Activated CD4-positive, alpha-beta T cell treated with anti-CD3 and anti-CD28 coated beads, Interleukin-2, amount 10 ng/mL, durations not matched to agents 24 days and 14 days (primary cell): ENCODE measurements at regions of chr5 and their contacts with region 1.

Region 1: GRCh38 chr5:160508780-160509361 is 87.2 kb downstream of the PTTG1 start:
- DNase-seq: peak; percentile 93
- H3K4me3 Mint-ChIP-seq: peak overlapping the region; percentile 31
- H3K27ac Mint-ChIP-seq: peak overlapping the region; percentile 67
- H3K4me1 Mint-ChIP-seq: peaks cover 52% of the 10 kb centered on the region
- H3K27me3 Mint-ChIP-seq: peaks cover 5% of the 10 kb centered on the region

Region 2: GRCh38 chr5:160418561-160419457 is 90.1 kb before region 1 on chr5 and contains the start of gene SLU7:
- intact Hi-C with region 1: loop called (anchors 5 kb)
- DNase-seq: peak; percentile 98
- H3K4me3 Mint-ChIP-seq: peak within 1 kb of the TSS; percentile 97
- H3K27ac Mint-ChIP-seq: peak within 1 kb of the TSS; percentile 97
- H3K4me1 Mint-ChIP-seq: peaks cover 61% of the 10 kb centered on the region
- H3K27me3 Mint-ChIP-seq: no peaks in the 10 kb centered on the region
- total RNA-seq, gene SLU7: 38.4 and 39.8 TPM in 2 replicates

Region 3: GRCh38 chr5:160496334-160496733 is 12.5 kb before region 1 on chr5:
- intact Hi-C with region 1: loop called (anchors 1 kb)
- DNase-seq: no peak
- H3K4me3 Mint-ChIP-seq: peak overlapping the region; percentile 18
- H3K27ac Mint-ChIP-seq: peak overlapping the region; percentile 70
- H3K4me1 Mint-ChIP-seq: peaks cover 30% of the 10 kb centered on the region
- H3K27me3 Mint-ChIP-seq: no peaks in the 10 kb centered on the region

Region 4: GRCh38 chr5:160787240-160787639 is 278.4 kb after region 1 on chr5:
- intact Hi-C with region 1: loop called (anchors 1 kb)
- DNase-seq: peak; percentile 63
- H3K4me3 Mint-ChIP-seq: no peak overlapping the region
- H3K27ac Mint-ChIP-seq: no peak overlapping the region
- H3K4me1 Mint-ChIP-seq: no peaks in the 10 kb centered on the region
- H3K27me3 Mint-ChIP-seq: peaks cover 2% of the 10 kb centered on the region

Region 5: DNA sequence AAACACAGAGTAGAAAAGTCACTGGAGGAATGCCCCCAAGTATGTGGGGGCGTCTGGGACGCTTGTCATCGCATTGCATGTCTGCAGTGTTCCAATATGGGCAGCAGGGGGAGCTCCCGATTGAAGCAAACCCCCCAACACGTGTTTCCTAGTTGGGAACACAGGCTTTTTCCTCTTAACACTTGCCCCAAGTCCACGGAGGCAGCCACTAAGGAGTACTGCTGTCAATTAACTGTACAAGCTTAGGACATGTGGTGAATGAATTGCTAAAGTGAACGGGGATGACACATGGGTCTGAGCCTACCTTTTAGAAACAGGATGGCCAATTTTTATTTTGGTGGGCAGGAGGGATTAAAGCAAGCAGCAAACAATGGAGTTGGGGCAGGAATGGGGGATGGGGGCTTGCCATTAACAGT is 1035.5 kb after region 1 on chr5:
- intact Hi-C with region 1: loop called (anchors 10 kb)
- DNase-seq: peak; percentile 70
- H3K4me3 Mint-ChIP-seq: no peak overlapping the region
- H3K27ac Mint-ChIP-seq: no peak overlapping the region
- H3K4me1 Mint-ChIP-seq: peaks cover 9% of the 10 kb centered on the region
- H3K27me3 Mint-ChIP-seq: peaks cover 48% of the 10 kb centered on the region